Dorsolateral prefrontal cortex (tissue), 120 donors: ENCODE measurements at regions of chr3 and their contacts with region 1.

Region 1: DNA sequence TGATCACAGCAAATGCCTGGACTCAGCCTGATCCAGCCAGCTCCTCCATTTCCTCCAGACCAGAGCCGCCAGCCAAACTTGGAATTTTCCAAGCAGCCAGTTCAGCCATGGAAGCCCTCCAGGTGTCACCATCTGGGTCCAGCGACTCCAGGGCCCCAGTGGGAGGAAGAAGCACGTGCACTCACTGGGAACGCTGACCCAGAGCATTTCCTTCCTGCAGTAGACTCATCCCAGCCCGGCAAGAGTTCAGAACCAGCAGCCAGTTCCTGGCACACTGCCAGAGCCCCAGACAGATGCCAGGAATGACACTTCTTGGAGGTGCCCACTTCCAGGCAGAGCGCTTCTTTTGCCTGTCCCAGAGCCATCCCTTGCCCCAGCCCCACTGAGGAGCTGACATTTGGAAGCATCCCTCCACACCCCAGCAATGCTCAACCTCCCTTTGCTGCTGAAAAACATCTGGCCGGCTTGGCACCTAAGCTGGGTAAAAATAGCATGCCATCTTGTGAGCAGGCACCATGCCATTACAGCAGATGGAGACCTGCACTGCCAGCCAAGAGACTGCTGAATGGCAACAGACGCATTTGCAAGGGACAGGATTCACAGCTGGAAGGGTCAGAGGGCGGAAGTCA is 460.3 kb upstream of the PROK2 start:
- DNase-seq: peak; percentile 55 to 87 (median 77)
- H3K4me3 ChIP-seq: no peak overlapping the region
- H3K27ac ChIP-seq: peak overlapping the region in 57 of 59 donors; percentile 15 to 98 (median 82)
- H3K27me3 ChIP-seq: no peaks in the 10 kb centered on the region
- CTCF ChIP-seq: no peak

Region 2: GRCh38 chr3:71601811-71602210 is 643.5 kb before region 1 on chr3:
- intact Hi-C with region 1: no loop called
- DNase-seq: no peak
- H3K4me3 ChIP-seq: no peak overlapping the region
- H3K27ac ChIP-seq: no peak overlapping the region
- H3K27me3 ChIP-seq: peaks cover 0 to 2% (median 0%) of the 10 kb centered on the region in 45 donors
- CTCF ChIP-seq: no peak

Region 3: DNA sequence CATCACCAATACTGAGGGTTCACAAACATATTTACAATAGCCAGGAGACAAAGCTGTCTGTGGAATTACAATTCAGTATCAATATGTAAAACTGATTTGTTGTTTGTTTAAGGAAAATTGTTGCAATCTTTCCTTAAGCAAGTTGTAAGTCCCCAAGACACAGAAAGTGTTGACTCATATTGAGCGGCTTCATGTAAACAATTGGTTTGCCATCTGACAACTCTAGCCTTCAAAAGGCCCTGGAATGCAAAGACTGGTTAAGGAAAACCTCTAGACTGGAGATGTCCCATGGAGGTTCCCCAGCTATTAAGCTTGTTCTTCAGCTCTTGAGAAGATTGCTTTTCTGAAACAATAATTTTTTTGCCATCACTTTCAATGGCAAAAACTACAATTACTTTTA is 176.7 kb before region 1 on chr3:
- intact Hi-C with region 1: loop called in 1 of 2 experiments (anchors 10 kb)
- DNase-seq: no peak
- H3K4me3 ChIP-seq: no peak overlapping the region
- H3K27ac ChIP-seq: no peak overlapping the region
- H3K27me3 ChIP-seq: no peaks in the 10 kb centered on the region
- CTCF ChIP-seq: no peak

Region 4: GRCh38 chr3:72123908-72124441 is 121.3 kb before region 1 on chr3:
- intact Hi-C with region 1: no loop called
- DNase-seq: no peak
- H3K4me3 ChIP-seq: no peak overlapping the region
- H3K27ac ChIP-seq: no peak overlapping the region
- H3K27me3 ChIP-seq: no peaks in the 10 kb centered on the region
- CTCF ChIP-seq: no peak

Region 5: DNA sequence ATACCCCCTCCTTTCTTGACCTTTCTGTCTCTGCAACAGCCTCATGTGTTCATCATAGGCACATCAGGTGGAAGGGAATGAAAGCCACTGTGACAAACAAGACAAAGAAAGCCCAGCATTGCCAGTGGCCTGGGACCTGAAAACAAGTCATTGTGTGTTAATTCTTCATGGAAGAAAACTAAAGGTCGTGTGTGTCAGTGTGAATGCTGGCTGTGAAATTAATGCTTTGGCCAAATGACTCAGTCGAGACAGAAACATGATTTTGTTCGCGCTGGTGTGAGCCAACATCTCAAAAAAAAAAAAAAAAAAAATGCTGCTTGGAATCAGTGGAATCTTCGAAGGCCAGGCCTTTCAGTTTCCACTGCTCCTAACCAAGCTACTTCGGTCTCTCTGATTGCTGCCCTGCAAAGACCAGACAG is 73.8 kb before region 1 on chr3:
- intact Hi-C with region 1: loop called (anchors 5 kb)
- DNase-seq: peak in 5 of 10 donors; percentile 43 to 80 (median 51)
- H3K4me3 ChIP-seq: peak overlapping the region in 42 of 59 donors; percentile 2 to 61 (median 32)
- H3K27ac ChIP-seq: peak overlapping the region; percentile 56 to 99 (median 92)
- H3K27me3 ChIP-seq: no peaks in the 10 kb centered on the region
- CTCF ChIP-seq: peak in 2 of 56 donors; percentile 19 to 22

Region 6: GRCh38 chr3:72177083-72178050 is 67.9 kb before region 1 on chr3:
- intact Hi-C with region 1: loop called (anchors 5 kb)
- DNase-seq: peak in 5 of 10 donors; percentile 34 to 52 (median 48)
- H3K4me3 ChIP-seq: peak overlapping the region in 52 of 59 donors; percentile 3 to 54 (median 31)
- H3K27ac ChIP-seq: peak overlapping the region in 55 of 59 donors; percentile 0 to 99 (median 71)
- H3K27me3 ChIP-seq: no peaks in the 10 kb centered on the region
- CTCF ChIP-seq: no peak

Region 7: DNA sequence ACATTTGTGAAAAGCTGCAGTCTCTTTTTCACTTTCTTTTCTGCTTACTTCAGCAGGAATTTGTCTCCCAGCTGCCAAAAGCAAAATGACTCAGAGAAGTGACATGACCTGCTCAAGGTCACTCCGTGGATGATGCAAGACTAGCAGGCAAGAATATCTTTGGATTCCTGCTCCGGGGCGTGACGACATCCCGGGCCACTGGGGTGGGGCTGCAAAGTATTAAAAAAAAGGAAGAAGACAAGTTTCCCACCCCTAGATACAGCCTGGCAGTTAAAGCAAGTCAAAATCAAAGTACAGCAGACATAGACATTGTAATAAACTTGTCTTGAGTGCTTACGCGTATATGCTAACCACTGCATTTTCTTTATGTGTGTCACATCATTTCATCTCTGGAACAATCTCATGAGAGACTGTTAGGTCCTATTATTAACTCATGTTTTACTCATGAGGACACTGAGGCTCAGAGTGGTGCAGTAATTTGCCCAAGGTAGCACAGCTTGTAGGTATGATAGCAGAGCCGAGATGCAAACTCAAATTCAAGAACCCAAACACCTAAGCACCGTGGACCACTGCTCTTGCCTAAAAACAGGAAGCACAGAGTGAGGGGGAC is 24.9 kb after region 1 on chr3:
- intact Hi-C with region 1: loop called in 1 of 2 experiments (anchors 2 kb)
- DNase-seq: peak in 1 of 10 donors; percentile 31
- H3K4me3 ChIP-seq: no peak overlapping the region
- H3K27ac ChIP-seq: peak overlapping the region in 40 of 59 donors; percentile 0 to 99 (median 90)
- H3K27me3 ChIP-seq: no peaks in the 10 kb centered on the region
- CTCF ChIP-seq: no peak